Activated T-helper 1 cell treated with anti-CD3 and anti-CD28 coated beads, Interleukin-12 subunit alpha, Interleukin-12 subunit beta, Interleukin-2, Interleukin-4 antibody, amounts not matched to agents 30 ng/mL and 10 ng/mL and 1 ng/mL, durations not matched to agents 14 hours and 24 hours and 36 hours (primary cell): ENCODE measurements at regions of chr19 and their contacts with region 1.

Region 1: DNA sequence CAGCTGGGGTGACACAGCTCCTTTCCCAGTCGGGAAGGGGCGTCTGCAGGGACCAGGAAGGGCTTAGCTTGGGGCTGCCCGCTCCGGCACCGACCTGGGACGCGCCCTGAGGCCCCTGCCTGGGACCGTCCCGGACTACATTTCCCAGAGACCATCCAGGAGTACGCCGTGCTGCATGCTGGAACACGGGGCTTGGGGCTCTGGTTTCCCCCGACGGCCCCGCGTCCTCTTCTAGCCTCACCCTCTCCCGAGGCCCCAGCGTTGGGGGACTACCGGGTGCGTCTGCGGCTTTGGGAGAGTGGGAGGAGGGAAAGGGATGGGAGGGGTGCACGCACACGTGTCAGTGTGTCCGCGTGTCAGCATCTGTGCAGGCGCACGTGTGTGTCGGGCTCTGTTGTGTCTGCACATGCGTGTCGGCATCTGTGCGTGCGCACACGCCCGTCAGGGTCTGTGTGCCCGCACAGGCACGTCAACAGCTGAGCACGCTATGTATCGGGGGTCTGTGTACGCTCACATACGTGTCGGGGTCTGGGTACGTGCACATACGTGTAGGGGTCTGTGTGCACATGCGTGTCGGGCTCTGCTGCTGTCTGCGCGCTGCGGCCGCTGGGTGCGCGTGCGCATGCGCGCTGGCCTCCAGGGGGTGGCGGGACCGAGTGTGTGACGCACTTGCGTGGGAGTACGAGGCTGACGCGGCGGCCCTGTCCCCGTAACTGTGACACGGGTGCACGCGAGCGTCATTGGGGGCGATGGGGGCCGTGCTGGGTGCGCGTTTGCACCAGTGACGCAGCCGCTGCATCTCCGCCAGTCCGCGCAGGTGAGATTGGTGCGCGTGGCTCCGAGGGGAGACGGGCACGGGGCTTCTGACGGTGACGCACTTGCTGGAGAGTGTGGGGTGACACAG is at the start of gene ZNF331:
- DNase-seq: peak; percentile 84
- H3K4me3 Mint-ChIP-seq: peak within 1 kb of the TSS; percentile 96
- H3K27ac Mint-ChIP-seq: peak within 1 kb of the TSS; percentile 97
- H3K4me1 Mint-ChIP-seq: no peaks in the 10 kb centered on the region
- H3K27me3 Mint-ChIP-seq: no peaks in the 10 kb centered on the region
- total RNA-seq, gene ZNF331: 17.9 and 19.6 TPM in 2 replicates

Region 2: DNA sequence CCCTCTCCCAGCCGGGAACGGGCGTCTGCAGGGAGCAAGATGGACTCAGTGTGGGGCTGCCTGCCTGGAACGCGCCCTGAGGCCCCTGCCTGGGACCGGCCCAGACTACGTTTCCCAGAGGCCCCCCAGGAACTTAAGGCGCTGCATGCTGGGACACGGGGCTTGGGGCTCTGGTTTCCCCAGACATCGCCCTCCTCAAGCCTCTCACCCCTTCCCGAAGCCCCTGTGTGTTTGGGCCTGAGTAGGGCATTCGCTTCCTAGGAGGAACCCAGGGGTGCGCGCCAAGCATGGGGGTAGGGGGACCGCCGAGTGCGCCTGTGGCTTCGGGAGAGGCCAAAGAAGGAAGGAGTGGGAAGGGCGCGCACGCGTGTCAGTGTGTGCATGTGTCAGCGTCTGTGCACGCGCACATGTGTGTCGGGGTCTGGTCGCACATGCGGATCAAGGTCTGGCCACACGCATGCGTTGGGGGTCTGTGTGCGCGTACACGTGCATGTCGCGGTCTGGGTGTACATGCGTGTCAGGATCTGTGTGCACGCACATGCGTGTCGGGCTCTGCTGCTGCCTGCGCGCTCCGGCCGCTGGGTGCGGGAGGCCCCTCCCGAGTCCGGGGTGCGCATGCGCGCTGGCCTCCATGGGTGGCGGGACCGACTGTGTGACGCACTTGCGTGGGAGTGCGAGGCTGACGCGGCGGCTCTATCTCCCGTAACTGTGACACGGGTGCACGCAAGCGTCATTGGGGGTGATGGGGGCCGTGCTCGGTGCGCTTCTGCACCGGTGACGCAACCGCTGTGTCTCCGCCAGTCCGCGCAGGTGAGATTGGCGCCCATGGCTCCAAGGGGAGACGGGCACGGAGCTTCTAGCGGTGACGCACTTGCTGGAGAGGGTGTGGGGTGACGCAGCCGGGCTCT is 16.4 kb after region 1 on chr19:
- intact Hi-C with region 1: loop called (anchors 1 kb)
- DNase-seq: peak; percentile 88
- H3K4me3 Mint-ChIP-seq: peak overlapping the region; percentile 90
- H3K27ac Mint-ChIP-seq: peak overlapping the region; percentile 95
- H3K4me1 Mint-ChIP-seq: peaks cover 23% of the 10 kb centered on the region
- H3K27me3 Mint-ChIP-seq: no peaks in the 10 kb centered on the region

Region 3: DNA sequence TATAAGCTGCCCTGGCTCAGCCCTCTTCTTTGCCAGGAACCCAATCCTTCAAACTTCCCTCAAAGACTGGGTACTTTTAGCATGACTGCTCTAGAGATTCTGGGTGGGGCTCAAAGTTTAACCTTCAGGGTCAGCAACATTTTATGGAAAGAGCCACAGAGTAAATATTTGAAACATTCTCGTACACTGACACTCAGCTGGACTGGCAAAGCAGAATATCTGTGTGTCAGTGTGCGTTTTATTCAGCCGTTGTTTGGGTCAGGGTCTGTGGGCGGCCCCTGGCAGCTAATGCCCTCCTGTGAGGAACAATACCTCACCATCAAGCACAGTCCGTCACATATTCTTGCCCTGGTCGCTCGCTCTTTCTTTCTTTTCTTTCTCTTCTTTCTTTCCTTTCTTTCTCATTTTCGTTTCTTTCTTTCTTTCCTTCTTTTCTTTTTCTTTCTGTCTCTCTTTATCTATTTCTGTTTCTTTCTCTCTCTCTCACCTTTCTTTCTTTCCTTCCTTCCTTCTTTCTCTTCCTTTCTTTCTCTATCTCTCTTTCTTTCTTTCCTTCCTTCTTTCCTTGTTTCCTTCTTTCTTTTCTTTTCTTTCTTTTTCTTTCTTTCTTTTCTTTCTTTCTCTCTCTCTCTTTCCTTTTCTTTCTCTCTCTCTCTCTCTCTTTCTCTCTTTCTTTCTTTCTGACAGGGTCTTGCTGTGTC is 104.8 kb after region 1 on chr19:
- intact Hi-C with region 1: no loop called
- DNase-seq: no peak
- H3K4me3 Mint-ChIP-seq: no peak overlapping the region
- H3K27ac Mint-ChIP-seq: no peak overlapping the region
- H3K4me1 Mint-ChIP-seq: no peaks in the 10 kb centered on the region
- H3K27me3 Mint-ChIP-seq: no peaks in the 10 kb centered on the region